B cell (primary cell): ENCODE measurements at regions of chr6 and their contacts with region 1.

Region 1: GRCh38 chr6:95577304-95578105 is at the start of gene MANEA:
- DNase-seq: peak; percentile 89
- ATAC-seq: peak; percentile 87
- H3K4me3 ChIP-seq: peak within 1 kb of the TSS; percentile 75 to 99 (median 91)
- H3K4me3 Mint-ChIP-seq: peak within 1 kb of the TSS; percentile 99
- H3K27ac ChIP-seq: peak within 1 kb of the TSS; percentile 86 to 91
- H3K27ac Mint-ChIP-seq: peak within 1 kb of the TSS; percentile 99
- H3K4me1 ChIP-seq: peaks cover 12 to 15% of the 10 kb centered on the region in 2 donors
- H3K4me1 Mint-ChIP-seq: peaks cover 39% of the 10 kb centered on the region
- H3K27me3 ChIP-seq: no peaks in the 10 kb centered on the region
- H3K27me3 Mint-ChIP-seq: no peaks in the 10 kb centered on the region
- CTCF ChIP-seq: no peak
- total RNA-seq, gene MANEA: 8.7 and 9.0 TPM in 2 replicates

Region 2: DNA sequence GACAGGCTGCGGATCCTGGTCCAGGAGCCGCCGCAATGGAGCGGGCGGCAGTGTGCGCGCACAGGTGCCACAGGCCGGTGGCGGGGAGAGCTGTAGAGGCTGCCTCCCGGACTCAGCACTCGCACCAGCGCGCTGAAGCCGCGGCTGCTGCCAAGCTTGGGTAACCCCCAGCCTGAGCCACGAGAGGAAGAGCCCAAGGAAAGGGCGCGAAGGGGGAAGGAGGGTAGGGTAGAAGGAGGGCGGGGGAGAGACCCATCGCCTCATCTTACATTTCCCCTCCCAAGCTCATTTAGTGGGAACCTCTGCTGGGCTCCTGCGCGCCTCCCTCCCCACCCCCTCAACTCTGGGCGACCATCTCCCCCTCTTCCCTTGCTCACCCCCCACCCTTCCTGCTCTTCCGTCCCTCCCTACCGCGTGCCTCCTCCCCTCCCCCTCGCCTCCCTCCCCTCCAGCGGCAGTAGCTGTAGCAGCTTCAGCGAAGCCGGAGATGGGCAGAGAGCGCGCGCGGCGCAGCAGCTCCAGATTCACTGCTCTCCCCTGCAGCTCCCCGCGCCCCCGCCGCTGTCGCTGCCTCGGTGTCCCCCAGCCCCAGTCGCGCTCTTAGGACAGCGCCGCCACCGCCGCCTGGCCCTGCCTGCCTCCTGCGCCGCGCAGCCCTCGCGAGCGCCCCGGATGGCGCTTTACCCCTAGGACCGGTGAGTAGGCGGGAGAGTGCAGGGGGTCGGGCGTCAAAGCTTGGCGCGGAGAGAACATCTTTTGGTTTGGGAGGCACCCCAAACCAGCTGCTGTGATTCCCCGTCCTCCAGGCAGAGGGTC is 438.2 kb after region 1 on chr6 and contains the start of gene FUT9:
- CTCF ChIA-PET with region 1: no interaction called
- POLR2A ChIA-PET with region 1: no interaction called
- intact Hi-C with region 1: no loop called
- DNase-seq: no peak
- ATAC-seq: no peak
- H3K4me3 ChIP-seq: no peak within 1 kb of the TSS
- H3K4me3 Mint-ChIP-seq: no peak within 1 kb of the TSS
- H3K27ac ChIP-seq: no peak within 1 kb of the TSS
- H3K27ac Mint-ChIP-seq: no peak within 1 kb of the TSS
- H3K4me1 ChIP-seq: no peaks in the 10 kb centered on the region
- H3K4me1 Mint-ChIP-seq: no peaks in the 10 kb centered on the region
- H3K27me3 ChIP-seq: peaks cover 0 to 6% (median 3%) of the 10 kb centered on the region in 4 experiments
- H3K27me3 Mint-ChIP-seq: peaks cover 18% of the 10 kb centered on the region
- CTCF ChIP-seq: no peak
- total RNA-seq, gene FUT9: not detected in 2 replicates

Region 3: GRCh38 chr6:97282726-97283617 is 1705.5 kb after region 1 on chr6 and contains the start of gene MMS22L:
- CTCF ChIA-PET with region 1: no interaction called
- POLR2A ChIA-PET with region 1: no interaction called
- intact Hi-C with region 1: loop called (anchors 2 kb)
- DNase-seq: peak; percentile 95
- ATAC-seq: peak; percentile 98
- H3K4me3 ChIP-seq: peak within 1 kb of the TSS; percentile 68 to 93 (median 88)
- H3K4me3 Mint-ChIP-seq: peak within 1 kb of the TSS; percentile 97
- H3K27ac ChIP-seq: peak within 1 kb of the TSS; percentile 40 to 44
- H3K27ac Mint-ChIP-seq: peak within 1 kb of the TSS; percentile 91
- H3K4me1 ChIP-seq: peaks cover 9 to 10% of the 10 kb centered on the region in 2 donors
- H3K4me1 Mint-ChIP-seq: peaks cover 21% of the 10 kb centered on the region
- H3K27me3 ChIP-seq: no peaks in the 10 kb centered on the region
- H3K27me3 Mint-ChIP-seq: no peaks in the 10 kb centered on the region
- CTCF ChIP-seq: no peak
- total RNA-seq, gene MMS22L: 20.5 and 23.5 TPM in 2 replicates